Activated CD4-positive, alpha-beta memory T cell treated with anti-CD3 and anti-CD28 coated beads, Interleukin-2, amount 10 ng/mL, durations not matched to agents 7 days and 5 days (primary cell): ENCODE measurements at regions of chr10 and their contacts with region 1.

Region 1: DNA sequence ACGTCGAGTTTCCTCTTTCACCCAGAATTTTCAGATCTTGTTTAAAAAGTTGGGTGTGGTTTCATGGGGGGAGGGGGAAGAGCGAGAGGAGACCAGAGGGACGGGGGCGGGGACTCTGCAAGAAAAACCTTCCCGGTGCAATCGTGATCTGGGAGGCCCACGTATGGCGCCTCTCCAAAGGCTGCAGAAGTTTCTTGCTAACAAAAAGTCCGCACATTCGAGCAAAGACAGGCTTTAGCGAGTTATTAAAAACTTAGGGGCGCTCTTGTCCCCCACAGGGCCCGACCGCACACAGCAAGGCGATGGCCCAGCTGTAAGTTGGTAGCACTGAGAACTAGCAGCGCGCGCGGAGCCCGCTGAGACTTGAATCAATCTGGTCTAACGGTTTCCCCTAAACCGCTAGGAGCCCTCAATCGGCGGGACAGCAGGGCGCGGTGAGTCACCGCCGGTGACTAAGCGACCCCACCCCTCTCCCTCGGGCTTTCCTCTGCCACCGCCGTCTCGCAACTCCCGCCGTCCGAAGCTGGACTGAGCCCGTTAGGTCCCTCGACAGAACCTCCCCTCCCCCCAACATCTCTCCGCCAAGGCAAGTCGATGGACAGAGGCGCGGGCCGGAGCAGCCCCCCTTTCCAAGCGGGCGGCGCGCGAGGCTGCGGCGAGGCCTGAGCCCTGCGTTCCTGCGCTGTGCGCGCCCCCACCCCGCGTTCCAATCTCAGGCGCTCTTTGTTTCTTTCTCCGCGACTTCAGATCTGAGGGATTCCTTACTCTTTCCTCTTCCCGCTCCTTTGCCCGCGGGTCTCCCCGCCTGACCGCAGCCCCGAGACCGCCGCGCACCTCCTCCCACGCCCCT is at the start of gene VIM:
- DNase-seq: peak; percentile 92
- H3K4me3 Mint-ChIP-seq: peak within 1 kb of the TSS; percentile 89
- H3K27ac Mint-ChIP-seq: peak within 1 kb of the TSS; percentile 95
- H3K4me1 Mint-ChIP-seq: peaks cover 55% of the 10 kb centered on the region
- H3K27me3 Mint-ChIP-seq: no peaks in the 10 kb centered on the region
- total RNA-seq, gene VIM: 2,572 to 2,607 TPM

Region 2: DNA sequence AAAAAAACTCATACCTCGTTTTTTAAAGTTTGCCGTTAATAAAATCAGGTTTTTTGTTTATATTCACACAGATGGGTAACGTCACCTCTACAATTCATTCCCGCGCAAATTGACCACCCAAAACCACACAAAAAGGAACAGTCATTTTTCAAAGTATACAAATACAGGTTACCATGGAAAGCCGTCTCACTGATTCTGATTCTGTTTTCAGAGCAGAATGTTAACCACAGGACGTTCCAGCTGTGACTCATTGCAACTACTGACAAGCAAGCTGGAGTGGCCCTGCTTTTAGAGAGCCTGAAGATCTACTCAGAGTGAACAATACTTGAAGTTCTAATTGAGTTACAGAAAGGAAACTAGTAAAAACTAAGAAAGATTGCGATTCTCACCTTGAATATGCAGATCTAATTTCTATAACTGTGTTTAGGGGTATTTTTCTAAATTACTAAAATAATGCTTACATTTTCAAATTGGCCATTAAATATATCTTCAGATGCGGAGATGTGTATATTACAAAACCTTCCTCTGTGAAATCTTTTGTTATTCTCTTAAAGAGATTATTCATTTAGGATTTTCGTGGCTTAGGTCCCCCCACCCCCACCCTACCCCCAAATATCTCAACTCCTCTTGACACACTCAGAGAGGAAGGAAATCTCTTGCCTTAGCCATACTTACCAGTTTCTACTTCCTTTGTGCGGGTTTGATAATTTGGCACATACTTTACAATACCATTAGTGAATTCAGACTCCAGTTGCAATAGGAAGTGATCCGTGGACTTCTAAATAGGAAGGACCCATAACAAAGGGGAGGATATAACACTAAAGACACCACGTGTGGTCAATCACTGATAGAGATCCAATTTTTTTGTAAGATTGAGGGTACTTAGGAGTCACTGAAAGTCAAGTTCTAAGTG is 204.7 kb before region 1 on chr10:
- CTCF ChIA-PET with region 1: interaction called, 30 read pairs
- POLR2A ChIA-PET with region 1: interaction called, 335 read pairs
- DNase-seq: peak; percentile 83
- H3K4me3 Mint-ChIP-seq: peak overlapping the region; percentile 55
- H3K27ac Mint-ChIP-seq: peak overlapping the region; percentile 97
- H3K4me1 Mint-ChIP-seq: peaks cover 57% of the 10 kb centered on the region
- H3K27me3 Mint-ChIP-seq: peaks cover 5% of the 10 kb centered on the region

Region 3: DNA sequence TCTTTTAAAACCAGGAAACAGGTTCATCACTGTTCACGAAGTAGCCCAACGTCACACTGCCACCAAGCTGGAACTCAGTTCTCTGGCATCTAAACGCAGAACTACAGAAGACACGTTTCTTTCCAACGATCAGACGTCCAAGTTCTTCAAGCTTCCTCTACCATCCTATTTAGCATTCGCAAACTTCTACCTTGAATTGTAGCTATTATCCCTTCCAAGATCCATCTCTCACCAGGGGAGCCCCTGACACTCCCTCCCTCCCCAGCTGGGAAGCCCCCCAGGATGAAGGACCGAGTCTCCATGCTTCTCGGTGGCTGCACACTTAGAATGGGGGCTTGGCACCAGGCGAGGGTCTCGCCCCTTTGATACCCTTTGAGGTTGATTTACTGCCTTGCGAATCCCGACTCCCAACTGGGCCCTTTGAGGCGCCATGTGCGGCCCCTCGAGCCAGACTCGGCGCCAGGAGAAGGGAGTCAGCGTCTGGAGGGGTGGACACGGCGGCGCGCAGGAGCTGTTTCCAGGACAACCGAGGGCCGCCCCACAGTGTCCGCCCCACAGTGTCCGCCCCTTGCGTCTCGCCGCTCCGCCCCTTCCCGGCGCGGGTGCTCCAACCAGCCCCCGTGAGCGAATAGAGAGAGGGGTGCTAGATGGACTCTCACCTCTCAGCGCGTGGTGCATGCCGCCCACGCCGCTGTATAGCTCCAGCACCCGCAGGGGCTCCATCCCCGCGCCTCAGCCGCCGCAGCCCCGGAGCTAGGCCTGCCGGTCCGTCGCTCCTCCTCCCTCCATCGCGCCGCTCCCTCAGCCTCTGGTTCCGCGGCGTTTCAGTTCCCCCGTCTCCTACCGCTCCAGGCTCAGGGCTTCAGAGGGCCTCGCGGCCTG is 27.2 kb before region 1 on chr10 and contains the start of gene TRDMT1:
- CTCF ChIA-PET with region 1: interaction called, 28 read pairs
- POLR2A ChIA-PET with region 1: interaction called, 215 read pairs
- DNase-seq: peak; percentile 77
- H3K4me3 Mint-ChIP-seq: peak within 1 kb of the TSS; percentile 92
- H3K27ac Mint-ChIP-seq: peak within 1 kb of the TSS; percentile 80
- H3K4me1 Mint-ChIP-seq: peaks cover 57% of the 10 kb centered on the region
- H3K27me3 Mint-ChIP-seq: no peaks in the 10 kb centered on the region
- total RNA-seq, gene TRDMT1: 12.3 to 12.7 TPM

Region 4: GRCh38 chr10:17216217-17216900 is 12.0 kb before region 1 on chr10:
- CTCF ChIA-PET with region 1: interaction called, 13 read pairs
- POLR2A ChIA-PET with region 1: interaction called, 117 read pairs
- DNase-seq: peak; percentile 47
- H3K4me3 Mint-ChIP-seq: peak overlapping the region; percentile 36
- H3K27ac Mint-ChIP-seq: peak overlapping the region; percentile 95
- H3K4me1 Mint-ChIP-seq: peaks cover 62% of the 10 kb centered on the region
- H3K27me3 Mint-ChIP-seq: no peaks in the 10 kb centered on the region

Region 5: GRCh38 chr10:17365402-17365801 is 137.1 kb after region 1 on chr10:
- CTCF ChIA-PET with region 1: no interaction called
- POLR2A ChIA-PET with region 1: no interaction called
- DNase-seq: no peak
- H3K4me3 Mint-ChIP-seq: no peak overlapping the region
- H3K27ac Mint-ChIP-seq: no peak overlapping the region
- H3K4me1 Mint-ChIP-seq: no peaks in the 10 kb centered on the region
- H3K27me3 Mint-ChIP-seq: peaks cover 6% of the 10 kb centered on the region

Region 6: GRCh38 chr10:17430647-17431355 is 202.5 kb after region 1 on chr10:
- CTCF ChIA-PET with region 1: interaction called, 3 read pairs
- POLR2A ChIA-PET with region 1: interaction called, 45 read pairs
- DNase-seq: peak; percentile 63
- H3K4me3 Mint-ChIP-seq: no peak overlapping the region
- H3K27ac Mint-ChIP-seq: no peak overlapping the region
- H3K4me1 Mint-ChIP-seq: peaks cover 59% of the 10 kb centered on the region
- H3K27me3 Mint-ChIP-seq: peaks cover 13% of the 10 kb centered on the region

Region 7: GRCh38 chr10:17512341-17513001 is 284.2 kb after region 1 on chr10:
- CTCF ChIA-PET with region 1: no interaction called
- POLR2A ChIA-PET with region 1: interaction called, 16 read pairs
- DNase-seq: no peak
- H3K4me3 Mint-ChIP-seq: no peak overlapping the region
- H3K27ac Mint-ChIP-seq: peak overlapping the region; percentile 59
- H3K4me1 Mint-ChIP-seq: peaks cover 55% of the 10 kb centered on the region
- H3K27me3 Mint-ChIP-seq: no peaks in the 10 kb centered on the region